ENCODE measurements at regions of chr6 and their contacts with region 1.

Region 1: GRCh38 chr6:20126789-20127653 is 85.2 kb downstream of the MBOAT1 start:
- DNase-seq: peak; percentile 14 to 74 (median 62)
- ATAC-seq: peak; percentile 46
- H3K4me3 ChIP-seq: no peak overlapping the region
- H3K4me3 Mint-ChIP-seq: no peak overlapping the region
- H3K27ac ChIP-seq: no peak overlapping the region
- H3K27ac Mint-ChIP-seq: peak overlapping the region; percentile 33
- H3K4me1 ChIP-seq: no peaks in the 10 kb centered on the region
- H3K4me1 Mint-ChIP-seq: peaks cover 3% of the 10 kb centered on the region
- H3K27me3 ChIP-seq: no peaks in the 10 kb centered on the region
- H3K27me3 Mint-ChIP-seq: no peaks in the 10 kb centered on the region
- CTCF ChIP-seq: peak; percentile 87

Region 2: DNA sequence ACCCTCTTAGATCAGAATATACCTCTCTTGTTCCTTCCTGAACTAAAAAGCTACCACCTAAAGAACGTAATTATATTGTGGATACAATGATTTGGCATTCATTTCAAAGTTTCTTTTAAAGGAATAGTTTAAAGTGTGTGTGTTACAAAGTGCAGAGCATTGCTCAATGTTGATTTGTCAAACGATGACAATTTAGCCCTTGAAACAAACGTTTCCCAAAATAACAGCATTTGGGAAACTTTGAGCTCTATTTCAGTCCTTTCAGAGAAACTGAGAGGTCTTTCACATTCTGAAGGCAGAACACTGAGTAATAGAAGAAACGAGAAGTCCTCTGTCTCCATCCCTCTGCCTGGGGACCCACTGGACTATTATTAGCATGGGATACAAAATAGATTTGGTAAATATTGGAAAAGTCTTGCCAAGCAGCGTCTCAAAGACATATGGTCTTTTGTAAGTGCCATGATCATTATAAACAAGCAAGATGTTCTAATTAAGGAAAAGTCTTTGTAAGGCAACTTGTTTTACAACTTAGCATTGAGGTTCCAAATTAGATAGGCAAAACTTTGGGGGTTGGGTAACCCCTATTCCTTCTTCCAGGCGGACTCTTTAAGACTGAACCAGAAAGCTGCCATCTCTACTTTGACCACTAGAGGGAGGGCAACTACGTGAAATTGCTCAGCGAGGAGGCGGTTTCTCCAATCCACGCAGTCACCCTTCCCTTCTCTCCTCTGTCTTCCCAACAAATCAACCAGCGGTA is 1531.1 kb before region 1 on chr6:
- CTCF ChIA-PET with region 1: interaction called, 3 read pairs
- POLR2A ChIA-PET with region 1: no interaction called
- intact Hi-C with region 1: loop called in 1 of 2 experiments (anchors 2 kb)
- DNase-seq: peak in 7 of 9 experiments; percentile 10 to 56 (median 45)
- ATAC-seq: no peak
- H3K4me3 ChIP-seq: no peak overlapping the region
- H3K4me3 Mint-ChIP-seq: no peak overlapping the region
- H3K27ac ChIP-seq: no peak overlapping the region
- H3K27ac Mint-ChIP-seq: no peak overlapping the region
- H3K4me1 ChIP-seq: no peaks in the 10 kb centered on the region
- H3K4me1 Mint-ChIP-seq: peaks cover 4% of the 10 kb centered on the region
- H3K27me3 ChIP-seq: no peaks in the 10 kb centered on the region
- H3K27me3 Mint-ChIP-seq: peaks cover 16% of the 10 kb centered on the region
- CTCF ChIP-seq: peak; percentile 98

Region 3: GRCh38 chr6:19204443-19204842 is 922.6 kb before region 1 on chr6:
- CTCF ChIA-PET with region 1: no interaction called
- POLR2A ChIA-PET with region 1: no interaction called
- intact Hi-C with region 1: no loop called
- DNase-seq: no peak
- ATAC-seq: no peak
- H3K4me3 ChIP-seq: no peak overlapping the region
- H3K4me3 Mint-ChIP-seq: no peak overlapping the region
- H3K27ac ChIP-seq: no peak overlapping the region
- H3K27ac Mint-ChIP-seq: no peak overlapping the region
- H3K4me1 ChIP-seq: no peaks in the 10 kb centered on the region
- H3K4me1 Mint-ChIP-seq: no peaks in the 10 kb centered on the region
- H3K27me3 ChIP-seq: no peaks in the 10 kb centered on the region
- H3K27me3 Mint-ChIP-seq: no peaks in the 10 kb centered on the region
- CTCF ChIP-seq: no peak

Region 4: GRCh38 chr6:20092071-20092566 is 34.9 kb before region 1 on chr6:
- CTCF ChIA-PET with region 1: interaction called, 12 read pairs
- POLR2A ChIA-PET with region 1: no interaction called
- intact Hi-C with region 1: no loop called
- DNase-seq: peak in 2 of 9 experiments; percentile 32 to 48
- ATAC-seq: no peak
- H3K4me3 ChIP-seq: no peak overlapping the region
- H3K4me3 Mint-ChIP-seq: no peak overlapping the region
- H3K27ac ChIP-seq: no peak overlapping the region
- H3K27ac Mint-ChIP-seq: no peak overlapping the region
- H3K4me1 ChIP-seq: no peaks in the 10 kb centered on the region
- H3K4me1 Mint-ChIP-seq: no peaks in the 10 kb centered on the region
- H3K27me3 ChIP-seq: no peaks in the 10 kb centered on the region
- H3K27me3 Mint-ChIP-seq: no peaks in the 10 kb centered on the region
- CTCF ChIP-seq: peak; percentile 45

Region 5: GRCh38 chr6:20109526-20109925 is 17.5 kb before region 1 on chr6:
- CTCF ChIA-PET with region 1: interaction called, 20 read pairs
- POLR2A ChIA-PET with region 1: no interaction called
- intact Hi-C with region 1: no loop called
- DNase-seq: no peak
- ATAC-seq: no peak
- H3K4me3 ChIP-seq: no peak overlapping the region
- H3K4me3 Mint-ChIP-seq: no peak overlapping the region
- H3K27ac ChIP-seq: no peak overlapping the region
- H3K27ac Mint-ChIP-seq: no peak overlapping the region
- H3K4me1 ChIP-seq: no peaks in the 10 kb centered on the region
- H3K4me1 Mint-ChIP-seq: no peaks in the 10 kb centered on the region
- H3K27me3 ChIP-seq: no peaks in the 10 kb centered on the region
- H3K27me3 Mint-ChIP-seq: no peaks in the 10 kb centered on the region
- CTCF ChIP-seq: no peak

Region 6: DNA sequence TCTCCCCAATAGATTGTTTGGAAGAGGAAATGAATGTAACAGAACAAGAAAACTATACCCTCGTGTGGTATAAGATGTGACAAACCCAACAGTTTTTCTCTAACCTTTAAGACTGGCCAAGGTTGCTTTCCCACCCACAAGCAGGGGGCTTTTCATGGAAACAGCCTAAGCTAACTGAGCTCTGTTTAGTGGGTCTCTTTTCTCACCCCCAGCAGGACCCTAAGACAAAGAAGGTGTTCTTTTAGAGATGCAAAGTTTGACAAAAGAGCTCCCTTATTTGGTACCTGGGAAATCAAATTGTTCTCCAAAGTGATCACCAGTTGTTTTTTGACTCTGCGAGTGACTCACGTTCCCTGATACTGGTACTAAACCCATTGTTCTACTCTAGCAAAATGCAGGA is 26.2 kb after region 1 on chr6:
- CTCF ChIA-PET with region 1: interaction called, 10 read pairs
- POLR2A ChIA-PET with region 1: no interaction called
- intact Hi-C with region 1: no loop called
- DNase-seq: no peak
- ATAC-seq: no peak
- H3K4me3 ChIP-seq: no peak overlapping the region
- H3K4me3 Mint-ChIP-seq: no peak overlapping the region
- H3K27ac ChIP-seq: no peak overlapping the region
- H3K27ac Mint-ChIP-seq: no peak overlapping the region
- H3K4me1 ChIP-seq: no peaks in the 10 kb centered on the region
- H3K4me1 Mint-ChIP-seq: no peaks in the 10 kb centered on the region
- H3K27me3 ChIP-seq: no peaks in the 10 kb centered on the region
- H3K27me3 Mint-ChIP-seq: no peaks in the 10 kb centered on the region
- CTCF ChIP-seq: no peak

Region 7: DNA sequence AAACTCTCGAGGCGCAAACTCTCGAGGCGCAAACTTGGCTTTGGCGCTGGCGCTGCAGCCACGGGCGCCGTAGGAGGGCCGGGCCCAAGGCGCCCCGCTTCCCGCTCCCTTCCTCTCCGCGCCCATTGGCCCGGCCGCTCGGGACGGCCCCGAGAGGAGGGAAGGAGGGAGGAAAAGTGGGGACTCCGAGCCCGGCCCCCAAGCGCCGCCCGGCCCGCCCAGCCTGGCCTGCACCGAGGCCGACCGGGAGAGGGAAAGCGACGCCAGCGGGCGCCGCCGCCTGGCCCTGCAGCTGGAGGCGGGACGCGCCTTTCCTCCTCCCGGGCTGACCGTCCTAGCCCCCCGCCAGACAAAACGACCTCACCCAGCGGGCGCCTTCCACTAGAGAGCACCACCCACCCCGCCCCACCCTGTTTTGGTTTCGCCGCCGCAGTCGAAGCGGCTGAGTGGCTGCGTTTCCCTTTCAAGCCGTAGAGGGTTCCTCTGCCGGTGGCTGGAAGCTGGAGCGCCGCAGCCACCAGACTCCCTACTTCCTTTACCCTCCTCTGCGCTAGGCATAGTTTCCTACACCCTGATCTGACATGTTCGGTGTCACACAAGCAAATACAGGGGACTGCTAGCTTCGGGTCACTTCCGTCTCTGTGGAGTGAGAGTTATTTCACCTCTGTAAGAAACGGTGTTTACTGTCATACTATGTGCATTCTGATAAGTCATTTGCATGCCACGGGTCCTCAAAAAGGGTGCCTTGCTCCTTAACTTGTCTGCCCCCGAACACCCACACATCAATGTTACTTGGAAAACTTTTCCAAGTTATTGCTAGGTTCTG is 85.6 kb after region 1 on chr6 and contains the start of gene MBOAT1:
- CTCF ChIA-PET with region 1: interaction called, 3 read pairs
- POLR2A ChIA-PET with region 1: interaction called, 4 read pairs
- intact Hi-C with region 1: loop called in 1 of 2 experiments (anchors 5 kb)
- DNase-seq: peak; percentile 22 to 81 (median 51)
- ATAC-seq: peak; percentile 63
- H3K4me3 ChIP-seq: peak within 1 kb of the TSS; percentile 57 to 62
- H3K4me3 Mint-ChIP-seq: peak within 1 kb of the TSS; percentile 95
- H3K27ac ChIP-seq: peak within 1 kb of the TSS; percentile 19 to 59
- H3K27ac Mint-ChIP-seq: peak within 1 kb of the TSS; percentile 90
- H3K4me1 ChIP-seq: peaks cover 20% of the 10 kb centered on the region
- H3K4me1 Mint-ChIP-seq: peaks cover 30% of the 10 kb centered on the region
- H3K27me3 ChIP-seq: no peaks in the 10 kb centered on the region
- H3K27me3 Mint-ChIP-seq: no peaks in the 10 kb centered on the region
- CTCF ChIP-seq: no peak
- total RNA-seq, gene MBOAT1: 5.9 to 6.5 TPM